Dorsolateral prefrontal cortex (tissue), 120 donors: ENCODE measurements at regions of chr2 and their contacts with region 1.

Region 1: GRCh38 chr2:236317938-236318396 is 53.8 kb upstream of the ASB18 start:
- DNase-seq: no peak
- H3K4me3 ChIP-seq: no peak overlapping the region
- H3K27ac ChIP-seq: no peak overlapping the region
- H3K27me3 ChIP-seq: no peaks in the 10 kb centered on the region
- CTCF ChIP-seq: no peak

Region 2: GRCh38 chr2:236343400-236344161 is 25.6 kb after region 1 on chr2:
- intact Hi-C with region 1: loop called in 1 of 2 experiments (anchors 2 kb)
- DNase-seq: peak in 6 of 10 donors; percentile 41 to 91 (median 66)
- H3K4me3 ChIP-seq: no peak overlapping the region
- H3K27ac ChIP-seq: peak overlapping the region in 6 of 59 donors; percentile 0 to 67 (median 35)
- H3K27me3 ChIP-seq: no peaks in the 10 kb centered on the region
- CTCF ChIP-seq: peak; percentile 61 to 91 (median 84)